GM10248 (cell line): ENCODE measurements at regions of chr5 and their contacts with region 1.

Region 1: DNA sequence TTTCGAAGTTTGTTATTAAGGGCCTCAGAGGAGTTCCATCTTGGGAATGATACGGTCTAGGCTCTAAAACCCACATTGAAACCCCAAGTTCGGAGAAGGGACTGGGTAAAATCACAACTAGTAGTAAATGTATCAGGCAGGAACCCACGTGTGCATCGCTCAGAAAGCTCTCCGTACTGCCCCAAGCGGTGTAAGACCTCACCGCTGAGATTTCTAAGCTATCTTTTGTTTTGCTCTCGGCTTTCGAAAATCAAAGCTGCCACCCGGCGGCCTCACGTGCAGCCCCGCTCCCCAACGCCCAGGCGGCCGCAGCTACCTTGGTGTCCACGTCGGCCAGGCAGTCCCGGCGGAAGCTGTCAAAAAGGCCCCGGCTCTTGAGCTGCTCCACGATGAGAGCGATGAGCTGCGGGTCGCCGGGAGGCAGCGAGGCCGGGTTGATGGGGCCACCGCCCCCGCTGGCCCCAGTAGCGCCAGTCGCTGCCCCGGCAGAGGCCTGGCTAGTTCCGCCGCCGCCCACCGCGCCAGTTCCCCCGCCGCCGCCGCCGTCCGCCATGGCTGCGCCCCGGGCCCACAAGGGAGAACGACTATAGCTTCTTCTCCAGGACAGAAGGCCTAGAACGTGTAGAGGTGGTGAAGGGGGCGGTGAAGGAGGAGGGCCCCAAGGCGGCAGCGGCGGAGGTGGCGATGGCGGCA is 420 bp downstream of the BOD1 start:
- DNase-seq: peak; percentile 75
- CTCF ChIP-seq: peak; percentile 64

Region 2: DNA sequence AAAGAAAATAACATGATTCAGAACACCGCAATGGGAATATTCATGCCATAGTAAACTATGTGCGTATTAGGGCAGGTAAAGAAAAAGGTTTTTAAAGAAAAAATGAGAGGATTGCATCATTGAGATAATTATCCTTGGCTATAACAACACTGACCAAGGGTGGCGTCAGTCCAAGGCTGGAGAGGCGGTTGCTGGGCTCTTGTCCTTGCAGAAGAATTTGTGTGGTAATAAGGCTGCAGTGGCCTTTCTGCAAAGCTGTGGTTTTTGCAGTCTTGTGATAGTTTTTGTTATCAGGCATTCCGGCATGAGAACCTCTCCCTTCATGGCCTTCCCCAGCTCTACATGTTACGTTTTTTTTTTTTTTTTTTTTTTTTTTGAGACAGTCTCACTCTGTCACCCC is 13.6 kb before region 1 on chr5:
- CTCF ChIA-PET with region 1: interaction called, 24 read pairs
- POLR2A ChIA-PET with region 1: no interaction called
- DNase-seq: no peak
- CTCF ChIP-seq: no peak

Region 3: GRCh38 chr5:173643963-173644362 is 27.9 kb after region 1 on chr5:
- CTCF ChIA-PET with region 1: interaction called, 13 read pairs
- POLR2A ChIA-PET with region 1: no interaction called
- DNase-seq: peak; percentile 58
- CTCF ChIP-seq: no peak

Region 4: GRCh38 chr5:173963867-173964441 is 347.9 kb after region 1 on chr5:
- CTCF ChIA-PET with region 1: interaction called, 247 read pairs
- POLR2A ChIA-PET with region 1: no interaction called
- DNase-seq: no peak
- CTCF ChIP-seq: no peak

Region 5: DNA sequence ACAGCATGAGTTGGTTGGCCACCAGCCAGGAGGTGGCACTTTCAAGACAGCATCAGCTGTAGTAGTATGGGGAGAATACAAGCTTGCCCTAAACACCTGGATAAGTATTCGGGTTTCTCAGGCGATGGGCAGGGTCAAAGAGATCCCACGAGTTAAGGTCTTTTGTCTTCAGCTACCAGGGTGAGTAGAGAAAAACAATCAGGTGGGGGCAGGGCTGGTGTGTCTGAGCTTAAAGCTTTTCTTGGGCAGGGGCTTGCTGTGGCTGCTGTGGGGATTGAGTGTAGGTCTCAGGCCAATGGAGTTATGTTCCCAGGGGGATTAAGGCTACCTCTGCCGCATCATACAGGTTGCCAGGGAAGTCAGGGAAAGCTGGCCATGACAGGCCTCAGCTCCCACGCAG is 365.3 kb after region 1 on chr5:
- CTCF ChIA-PET with region 1: interaction called, 36 read pairs
- POLR2A ChIA-PET with region 1: no interaction called
- DNase-seq: no peak
- CTCF ChIP-seq: no peak

Region 6: DNA sequence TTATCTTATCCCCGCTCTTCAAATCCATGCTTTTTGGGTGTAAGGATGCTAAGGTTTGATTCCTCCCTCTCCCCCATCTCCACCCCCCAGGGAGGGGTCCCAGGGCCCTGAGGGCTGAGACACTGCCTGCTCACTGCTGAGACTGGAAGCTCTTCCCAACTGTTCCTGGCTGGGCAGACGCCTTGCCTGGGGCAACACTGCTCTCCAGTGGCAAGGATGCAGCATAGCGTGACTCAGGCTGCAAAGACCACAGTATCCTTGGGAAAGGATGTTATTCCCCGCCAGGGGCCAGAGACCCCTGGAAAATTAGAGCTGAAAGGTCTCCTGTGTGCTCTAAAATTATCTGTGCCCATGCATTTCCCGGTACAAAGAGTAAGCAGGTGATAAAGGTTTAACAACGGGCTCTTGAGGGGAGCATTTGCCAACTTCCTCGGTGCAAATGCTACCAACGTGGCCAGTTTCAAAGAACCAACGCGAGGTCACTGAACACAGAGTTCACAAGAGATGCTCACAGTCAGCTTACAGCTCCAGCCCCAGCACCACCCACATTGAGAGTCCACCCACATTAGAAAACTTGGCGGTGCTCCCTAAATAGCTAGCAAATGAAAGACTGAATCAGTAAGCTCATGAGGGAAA is 701.3 kb after region 1 on chr5:
- CTCF ChIA-PET with region 1: interaction called, 33 read pairs
- POLR2A ChIA-PET with region 1: no interaction called
- DNase-seq: peak; percentile 42
- CTCF ChIP-seq: peak; percentile 67